ENCODE measurements at regions of chr20 and their contacts with region 1.

Region 1: DNA sequence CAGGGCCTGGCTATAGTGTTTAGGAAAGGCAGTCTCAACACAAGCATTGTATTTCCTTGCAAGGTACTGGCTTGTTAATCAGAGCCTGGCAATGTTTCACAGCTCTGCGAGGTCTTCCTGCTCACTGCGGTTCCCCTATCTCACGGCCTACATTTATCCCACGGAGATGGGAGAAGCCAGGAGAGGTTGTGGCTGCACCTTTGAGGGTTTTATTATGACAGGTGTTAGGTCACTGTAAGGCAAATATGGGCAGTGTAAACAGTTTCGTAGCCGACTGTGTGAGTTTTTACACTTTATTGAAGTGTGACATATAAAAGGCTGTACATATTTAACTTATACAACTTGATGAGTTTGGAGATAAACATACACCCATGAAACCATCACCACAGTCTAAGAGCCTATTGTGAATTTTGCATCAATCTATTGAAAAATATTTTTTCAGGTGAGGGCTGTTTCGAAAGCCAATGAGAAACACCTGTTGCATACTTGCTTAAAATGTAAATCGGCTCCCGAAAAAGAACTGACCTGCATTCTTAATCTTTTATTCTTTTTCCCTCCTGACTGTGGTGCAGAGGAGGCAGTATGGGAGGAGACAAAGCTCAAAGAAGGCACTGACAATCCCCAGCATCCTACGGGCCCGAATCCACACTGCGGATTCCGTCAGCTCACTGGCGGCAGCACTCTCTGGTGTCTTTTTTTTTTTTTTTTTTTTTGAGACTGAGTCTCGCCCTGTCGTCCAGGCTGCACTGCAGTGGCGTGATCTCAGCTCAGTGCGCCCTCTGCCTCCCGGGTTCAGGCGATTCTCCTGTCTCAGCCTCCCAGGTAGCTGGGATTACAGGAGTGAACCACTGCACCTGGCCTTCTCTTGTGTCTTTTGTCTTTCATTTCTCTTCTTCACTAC is 7.5 kb upstream of the RBM38 start:
- DNase-seq: no peak
- ATAC-seq: no peak
- H3K4me3 Mint-ChIP-seq: no peak overlapping the region
- H3K27ac Mint-ChIP-seq: no peak overlapping the region
- H3K4me1 Mint-ChIP-seq: peaks cover 22% of the 10 kb centered on the region
- H3K27me3 Mint-ChIP-seq: no peaks in the 10 kb centered on the region

Region 2: GRCh38 chr20:57398231-57398821 is 14.6 kb after region 1 on chr20:
- CTCF ChIA-PET with region 1: interaction called, 10 read pairs
- POLR2A ChIA-PET with region 1: interaction called, 5 read pairs
- DNase-seq: peak; percentile 91
- ATAC-seq: peak; percentile 80
- H3K4me3 Mint-ChIP-seq: peak overlapping the region; percentile 81
- H3K27ac Mint-ChIP-seq: peak overlapping the region; percentile 94
- H3K4me1 Mint-ChIP-seq: peaks cover 93% of the 10 kb centered on the region
- H3K27me3 Mint-ChIP-seq: no peaks in the 10 kb centered on the region

Region 3: DNA sequence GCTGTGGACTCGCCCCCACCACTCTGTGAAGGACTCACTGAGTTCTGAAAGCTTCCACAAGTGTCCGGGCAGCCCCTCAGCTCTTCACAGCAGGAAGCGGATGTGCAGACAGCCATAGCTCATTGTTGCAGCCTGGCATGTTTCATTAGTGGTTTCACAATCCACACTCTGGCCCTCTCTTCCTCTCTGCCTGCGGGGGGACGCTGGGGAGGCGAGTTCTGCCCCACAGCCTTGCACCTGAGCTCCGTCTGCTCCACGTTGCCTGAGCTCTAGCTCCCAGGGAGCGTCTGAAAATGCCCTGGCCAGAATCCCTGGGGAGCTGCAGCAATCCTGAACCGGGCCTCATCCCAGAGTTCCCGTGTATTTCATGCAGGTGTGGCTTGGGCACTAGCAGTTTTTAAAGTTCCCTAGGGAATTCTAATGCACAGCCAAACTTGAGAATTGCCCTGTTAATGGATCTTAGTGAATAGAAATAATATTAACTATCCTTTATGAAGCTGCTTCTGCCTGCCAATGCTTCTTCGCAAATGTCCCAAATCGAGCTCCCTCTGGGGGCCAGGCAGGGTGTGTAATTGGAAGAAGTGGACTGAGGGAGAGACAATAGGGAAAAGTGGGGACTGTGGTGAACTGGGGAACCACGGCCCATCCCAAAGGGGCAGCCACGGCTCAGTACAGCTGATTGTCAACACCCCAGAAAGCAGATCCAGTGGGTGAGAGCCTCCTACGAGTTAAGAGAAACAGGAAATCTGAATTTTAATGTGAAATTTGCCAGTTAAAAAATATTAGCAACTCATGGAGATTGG is 89.8 kb after region 1 on chr20:
- CTCF ChIA-PET with region 1: interaction called, 17 read pairs
- POLR2A ChIA-PET with region 1: no interaction called
- DNase-seq: peak; percentile 66
- ATAC-seq: peak; percentile 78
- H3K4me3 Mint-ChIP-seq: no peak overlapping the region
- H3K27ac Mint-ChIP-seq: peak overlapping the region; percentile 67
- H3K4me1 Mint-ChIP-seq: peaks cover 34% of the 10 kb centered on the region
- H3K27me3 Mint-ChIP-seq: peaks cover 4% of the 10 kb centered on the region

Region 4: DNA sequence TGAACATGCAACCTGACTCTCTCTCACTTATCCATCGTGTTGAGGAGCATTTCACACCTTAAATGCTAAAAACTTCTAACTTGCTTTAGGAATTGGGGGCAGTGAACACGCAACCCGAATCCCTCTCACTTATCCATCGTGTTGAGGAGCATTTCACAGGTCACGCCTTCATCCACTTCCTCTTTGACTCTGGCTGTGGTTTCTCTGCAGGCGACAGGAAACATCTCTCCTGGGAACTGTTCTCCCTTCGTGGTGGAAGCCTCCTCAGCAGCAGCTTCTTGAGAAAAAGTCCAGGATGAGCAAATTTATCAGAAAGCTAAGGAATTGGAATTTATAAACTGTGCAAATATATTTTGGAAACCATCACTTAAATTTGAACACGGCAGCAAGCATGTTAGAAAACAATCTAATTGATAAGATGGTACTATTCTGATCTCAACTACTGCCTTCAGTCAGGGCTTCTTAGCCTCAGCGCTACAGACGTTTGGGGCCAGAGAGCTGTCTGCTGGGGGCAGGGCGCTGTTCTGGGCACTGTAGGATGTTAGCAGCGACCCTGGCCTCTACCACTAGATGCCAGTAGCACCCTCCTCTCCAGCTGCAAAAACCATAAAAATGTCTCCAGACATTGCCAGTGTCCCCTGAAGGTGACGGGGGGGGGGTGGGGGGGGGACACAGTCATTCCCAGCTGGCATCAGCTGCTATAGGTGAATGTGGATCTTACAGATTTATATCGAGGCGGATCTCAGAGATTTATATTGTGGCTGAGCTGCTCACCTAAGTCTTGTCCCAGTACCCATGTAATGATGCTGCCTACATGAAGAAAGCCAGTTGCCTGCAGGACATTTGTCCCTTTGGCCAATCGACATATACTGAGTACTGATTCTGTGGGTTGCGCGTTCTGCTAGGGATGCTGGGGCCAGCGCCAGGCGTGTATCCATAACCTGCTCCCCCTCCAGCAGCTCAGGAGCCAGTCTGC is 115.0 kb after region 1 on chr20:
- CTCF ChIA-PET with region 1: interaction called, 41 read pairs
- POLR2A ChIA-PET with region 1: no interaction called
- DNase-seq: peak; percentile 61
- ATAC-seq: peak; percentile 73
- H3K4me3 Mint-ChIP-seq: no peak overlapping the region
- H3K27ac Mint-ChIP-seq: no peak overlapping the region
- H3K4me1 Mint-ChIP-seq: peaks cover 12% of the 10 kb centered on the region
- H3K27me3 Mint-ChIP-seq: peaks cover 49% of the 10 kb centered on the region

Measured in activated CD8-positive, alpha-beta T cell treated with anti-CD3 and anti-CD28 coated beads, Interleukin-2, amount 10 ng/mL, durations not matched to agents 7 days and 5 days (primary cell).